Mucosa of descending colon (tissue), 3 donors: ENCODE measurements at regions of chr6 and their contacts with region 1.

Region 1: GRCh38 chr6:72084992-72085569 is 198.7 kb downstream of the RIMS1 start:
- DNase-seq: no peak
- ATAC-seq: no peak
- H3K4me3 ChIP-seq: no peak overlapping the region
- H3K4me1 ChIP-seq: no peaks in the 10 kb centered on the region
- CTCF ChIP-seq: no peak

Region 2: GRCh38 chr6:71533939-71534379 is 551.1 kb before region 1 on chr6:
- intact Hi-C with region 1: loop called in 1 of 2 experiments (anchors 10 kb)
- DNase-seq: peak in 1 of 3 donors; percentile 31
- ATAC-seq: no peak
- H3K4me3 ChIP-seq: no peak overlapping the region
- H3K4me1 ChIP-seq: no peaks in the 10 kb centered on the region
- CTCF ChIP-seq: peak; percentile 26

Region 3: DNA sequence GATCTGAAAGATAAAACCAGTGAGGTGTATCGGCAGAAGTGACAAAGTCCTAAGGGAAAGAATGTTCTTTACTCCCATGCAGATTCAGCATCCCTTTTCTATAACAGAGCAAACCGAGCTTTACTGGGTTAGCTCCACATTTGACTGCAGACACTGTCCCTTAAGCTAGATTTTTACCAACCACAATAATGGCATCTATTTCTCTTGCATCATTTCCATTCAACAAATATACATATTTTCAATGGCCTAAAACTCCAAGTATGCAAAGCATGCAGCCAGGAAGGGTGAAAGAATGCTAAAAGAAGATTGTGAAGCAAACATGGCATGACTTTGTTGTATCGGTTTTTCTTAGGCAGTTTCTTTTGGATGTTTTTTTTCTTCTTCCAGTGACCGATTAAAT is 541.1 kb before region 1 on chr6:
- intact Hi-C with region 1: loop called (anchors 10 kb)
- DNase-seq: no peak
- ATAC-seq: no peak
- H3K4me3 ChIP-seq: no peak overlapping the region
- H3K4me1 ChIP-seq: no peaks in the 10 kb centered on the region
- CTCF ChIP-seq: no peak